WTC11 (cell line): ENCODE measurements at regions of chr19 and their contacts with region 1.

Region 1: DNA sequence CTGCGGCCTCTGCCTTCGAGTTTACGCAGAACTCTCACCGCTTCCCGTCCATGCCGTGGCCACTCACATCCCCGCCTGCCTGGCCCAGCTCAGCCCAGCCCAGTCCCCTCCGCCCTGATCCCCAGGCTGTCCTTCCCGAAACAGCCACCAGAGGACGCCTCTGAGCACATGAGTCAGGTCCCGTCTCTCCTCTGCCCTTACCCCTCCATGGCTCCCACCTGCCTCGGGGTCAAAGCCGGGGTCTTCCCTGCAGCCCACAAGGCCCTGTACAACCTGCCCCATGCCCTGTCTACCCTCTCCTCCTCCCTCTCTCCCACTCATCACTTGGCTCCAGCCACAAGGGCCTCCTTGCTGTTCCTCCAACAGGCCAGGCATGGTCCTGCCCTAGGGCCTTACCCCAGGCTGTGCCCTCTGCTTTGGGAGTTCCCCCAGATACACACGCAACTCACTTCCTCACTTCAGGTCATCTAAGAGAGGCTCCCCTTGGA is 8.1 kb upstream of the SEMA6B start:
- DNase-seq: peak; percentile 96
- ATAC-seq: peak; percentile 94
- H3K4me3 Mint-ChIP-seq: no peak overlapping the region
- H3K27ac Mint-ChIP-seq: no peak overlapping the region
- H3K4me1 Mint-ChIP-seq: peaks cover 2% of the 10 kb centered on the region; the same call in 1 of the 2 replicates
- H3K27me3 Mint-ChIP-seq: no peaks in the 10 kb centered on the region
- CTCF ChIP-seq: peak; percentile 99

Region 2: DNA sequence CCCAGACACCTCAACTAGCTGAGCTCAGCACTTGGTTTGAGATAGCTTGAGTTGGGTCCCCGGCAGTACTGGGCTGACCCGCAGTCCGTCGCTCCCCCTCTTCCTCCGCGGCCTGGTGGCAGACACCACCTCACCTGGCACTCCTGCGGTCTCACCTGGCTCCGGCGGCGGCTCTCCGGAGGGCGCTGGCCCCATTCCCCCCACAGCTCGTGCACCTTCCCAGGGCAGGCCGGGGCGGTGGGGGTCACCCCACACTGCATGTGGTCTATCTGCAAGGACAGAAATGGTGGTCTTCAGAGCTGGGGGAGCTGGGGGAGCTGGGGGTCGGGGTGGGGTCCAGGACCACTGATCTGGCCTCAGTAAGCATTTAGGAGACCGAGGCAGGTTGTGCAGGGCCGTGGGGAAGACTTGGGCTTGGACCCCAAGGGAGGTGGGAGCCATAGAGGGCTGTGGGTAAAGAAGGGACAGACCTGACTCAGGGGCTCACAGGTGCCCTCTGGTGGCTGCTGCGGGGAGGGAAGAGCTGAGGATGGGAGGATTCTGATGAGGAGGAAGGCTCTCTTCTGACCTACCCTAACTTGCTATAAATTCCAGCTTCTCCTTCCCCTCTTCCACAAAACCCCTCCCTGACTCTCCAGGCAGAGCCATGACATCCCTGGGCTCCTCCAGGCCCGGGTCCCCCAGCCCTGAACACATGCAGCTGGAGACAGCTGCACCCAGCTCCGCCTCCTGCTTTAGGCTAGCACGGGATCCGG is 42.6 kb before region 1 on chr19:
- CTCF ChIA-PET with region 1: interaction called, 42 read pairs
- POLR2A ChIA-PET with region 1: no interaction called
- DNase-seq: peak; percentile 87
- ATAC-seq: peak; percentile 82
- H3K4me3 Mint-ChIP-seq: no peak overlapping the region
- H3K27ac Mint-ChIP-seq: no peak overlapping the region
- H3K4me1 Mint-ChIP-seq: no peaks in the 10 kb centered on the region
- H3K27me3 Mint-ChIP-seq: peaks cover 35% of the 10 kb centered on the region
- CTCF ChIP-seq: peak; percentile 69; the same call in 1 of the 2 replicates

Region 3: DNA sequence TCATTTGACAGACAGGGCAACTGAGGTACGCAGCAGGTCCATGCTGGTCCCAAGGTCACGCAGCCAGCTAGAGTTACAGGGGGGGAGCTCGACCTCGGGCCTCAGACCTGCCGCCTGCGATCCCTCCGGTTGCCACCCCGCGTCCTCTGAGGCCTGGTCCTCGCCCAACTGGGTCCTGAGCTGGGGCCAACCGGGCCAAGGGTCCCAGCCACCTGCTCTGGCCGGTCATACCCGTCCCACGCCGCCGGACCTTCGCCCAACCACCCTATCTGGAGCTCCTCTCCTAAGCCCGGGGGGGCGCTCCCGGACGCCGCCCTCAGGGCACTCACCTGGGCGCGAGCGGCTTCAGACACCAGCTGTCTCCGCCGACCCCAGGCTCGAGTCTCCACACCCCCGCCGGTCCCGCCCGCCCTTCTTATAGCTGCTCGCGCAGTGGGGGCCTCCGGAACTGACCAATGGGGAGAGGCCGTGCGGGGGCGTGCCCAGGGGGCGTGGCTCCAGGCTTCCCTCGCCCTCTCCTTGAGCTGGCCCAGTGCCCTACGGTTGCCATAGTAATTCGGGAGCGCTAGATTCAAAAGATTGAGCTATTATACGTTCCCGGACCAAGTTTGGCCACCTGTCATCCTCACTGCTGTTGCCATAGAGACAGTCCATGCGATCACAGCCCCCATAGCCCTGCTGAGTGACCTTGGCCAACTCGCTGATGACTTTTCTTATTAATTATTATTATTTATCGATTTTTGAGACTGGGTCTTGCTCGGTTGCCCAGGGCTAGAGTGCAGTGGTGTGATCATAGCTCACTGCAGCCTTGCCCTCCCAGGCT is 32.6 kb before region 1 on chr19 and contains the start of gene PLIN5:
- CTCF ChIA-PET with region 1: interaction called, 20 read pairs
- POLR2A ChIA-PET with region 1: no interaction called
- DNase-seq: peak; percentile 97
- ATAC-seq: peak; percentile 93
- H3K4me3 Mint-ChIP-seq: peak within 1 kb of the TSS; percentile 53
- H3K27ac Mint-ChIP-seq: no peak within 1 kb of the TSS
- H3K4me1 Mint-ChIP-seq: peaks cover 3% of the 10 kb centered on the region; the same call in 1 of the 2 replicates
- H3K27me3 Mint-ChIP-seq: peaks cover 60% of the 10 kb centered on the region
- CTCF ChIP-seq: no peak
- total RNA-seq, gene PLIN5: 3.3 to 4.2 TPM (median 3.9 TPM) in 3 replicates

Region 4: DNA sequence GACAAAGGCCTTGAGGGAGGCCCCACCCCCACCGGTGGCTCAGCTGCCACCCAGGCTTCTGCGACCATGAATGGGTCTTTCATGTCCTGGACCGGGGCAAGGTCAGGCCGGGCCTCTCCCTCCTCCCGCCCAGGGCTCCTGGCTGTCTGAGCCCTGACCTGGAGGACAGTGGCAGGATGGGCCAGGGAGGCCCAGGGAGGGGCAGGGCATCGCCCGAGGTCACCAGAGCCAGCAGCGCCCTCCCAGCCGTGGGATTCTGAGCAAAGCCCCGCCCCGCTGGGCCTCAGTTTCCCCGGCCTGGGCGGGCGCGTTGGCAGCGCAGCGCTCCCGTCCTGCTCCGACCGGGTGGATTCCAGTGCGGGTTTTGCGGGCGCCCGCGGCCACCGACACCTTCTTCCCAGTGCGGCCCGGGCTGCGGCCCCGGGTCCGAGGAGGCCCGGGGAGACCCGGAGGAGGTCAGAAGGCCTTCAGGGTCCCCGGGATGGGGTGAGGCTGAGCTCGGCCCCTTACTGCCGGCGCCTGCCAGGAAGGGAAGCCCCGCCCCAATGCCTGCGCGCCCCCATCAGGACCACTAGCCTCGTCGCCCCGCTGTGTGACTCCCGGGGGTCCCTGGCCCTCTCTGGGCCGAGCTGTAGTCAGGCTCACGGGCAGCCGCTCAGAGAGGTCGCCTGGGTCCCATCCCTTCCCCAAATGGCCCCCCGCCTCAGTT is 16.5 kb after region 1 on chr19:
- CTCF ChIA-PET with region 1: interaction called, 31 read pairs
- POLR2A ChIA-PET with region 1: no interaction called
- DNase-seq: peak; percentile 72
- ATAC-seq: peak; percentile 43
- H3K4me3 Mint-ChIP-seq: peak overlapping the region; percentile 68
- H3K27ac Mint-ChIP-seq: no peak overlapping the region
- H3K4me1 Mint-ChIP-seq: peaks cover 21% of the 10 kb centered on the region
- H3K27me3 Mint-ChIP-seq: peaks cover 54% of the 10 kb centered on the region
- CTCF ChIP-seq: no peak

Region 5: GRCh38 chr19:4597975-4598671 is 30.5 kb after region 1 on chr19:
- CTCF ChIA-PET with region 1: interaction called, 48 read pairs
- POLR2A ChIA-PET with region 1: no interaction called
- DNase-seq: peak; percentile 88
- ATAC-seq: peak; percentile 74
- H3K4me3 Mint-ChIP-seq: peak overlapping the region; percentile 80
- H3K27ac Mint-ChIP-seq: no peak overlapping the region
- H3K4me1 Mint-ChIP-seq: peaks cover 10% of the 10 kb centered on the region
- H3K27me3 Mint-ChIP-seq: peaks cover 67% of the 10 kb centered on the region
- CTCF ChIP-seq: no peak

Region 6: DNA sequence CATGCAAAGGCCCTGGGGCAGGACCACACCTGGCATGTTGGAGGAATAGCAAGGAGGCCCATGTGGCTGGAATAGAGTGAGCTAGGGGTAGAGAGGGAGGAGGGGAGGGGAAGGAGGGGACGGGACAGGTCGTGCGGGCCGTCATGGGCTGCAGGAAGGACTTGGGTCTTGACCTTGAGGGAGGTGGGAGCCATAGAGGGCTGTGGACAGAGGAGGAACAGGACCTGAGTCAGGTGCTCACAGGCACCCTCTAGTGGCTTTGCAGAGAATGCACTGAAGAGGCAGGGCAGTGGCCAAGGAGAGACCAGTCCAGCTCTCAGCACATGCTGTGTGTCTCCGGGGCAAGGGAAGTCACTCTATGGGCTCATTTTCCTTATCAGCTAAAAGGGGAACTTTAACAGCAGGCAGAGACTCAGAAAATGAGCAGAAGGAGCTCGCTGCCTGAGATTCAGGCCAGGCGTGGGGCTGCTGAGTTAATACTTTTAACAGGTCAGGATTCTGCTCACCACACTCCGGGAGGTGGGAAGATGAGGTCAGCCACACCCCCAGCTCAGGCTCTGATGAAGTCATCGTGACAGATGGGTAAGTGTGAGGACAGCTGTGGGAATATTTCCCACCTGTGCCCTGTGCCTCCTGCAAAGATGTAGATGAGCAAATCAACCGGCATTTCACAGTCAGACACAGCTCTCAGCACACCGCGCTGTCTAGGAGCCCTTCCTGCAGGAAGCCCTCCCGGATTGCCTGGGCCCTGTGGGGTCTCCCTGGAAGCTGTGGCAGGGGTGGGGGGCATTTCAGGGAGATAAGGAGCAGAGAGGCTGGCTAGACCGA is 65.7 kb after region 1 on chr19:
- CTCF ChIA-PET with region 1: interaction called, 217 read pairs
- POLR2A ChIA-PET with region 1: no interaction called
- DNase-seq: peak; percentile 80
- ATAC-seq: peak; percentile 68
- H3K4me3 Mint-ChIP-seq: 0 out of 2 replicates have a peak overlapping the region, but pooled peaks have one; percentile 8
- H3K27ac Mint-ChIP-seq: no peak overlapping the region
- H3K4me1 Mint-ChIP-seq: peaks cover 6% of the 10 kb centered on the region
- H3K27me3 Mint-ChIP-seq: peaks cover 48% of the 10 kb centered on the region
- CTCF ChIP-seq: peak; percentile 90

Region 7: GRCh38 chr19:5016781-5017180 is 449.2 kb after region 1 on chr19:
- CTCF ChIA-PET with region 1: no interaction called
- POLR2A ChIA-PET with region 1: no interaction called
- DNase-seq: no peak
- ATAC-seq: peak; percentile 65
- H3K4me3 Mint-ChIP-seq: no peak overlapping the region
- H3K27ac Mint-ChIP-seq: no peak overlapping the region
- H3K4me1 Mint-ChIP-seq: no peaks in the 10 kb centered on the region
- H3K27me3 Mint-ChIP-seq: no peaks in the 10 kb centered on the region
- CTCF ChIP-seq: no peak